Activated CD4-positive, alpha-beta memory T cell treated with anti-CD3 and anti-CD28 coated beads for 36 hours (primary cell): ENCODE measurements at regions of chr19 and their contacts with region 1.

Region 1: DNA sequence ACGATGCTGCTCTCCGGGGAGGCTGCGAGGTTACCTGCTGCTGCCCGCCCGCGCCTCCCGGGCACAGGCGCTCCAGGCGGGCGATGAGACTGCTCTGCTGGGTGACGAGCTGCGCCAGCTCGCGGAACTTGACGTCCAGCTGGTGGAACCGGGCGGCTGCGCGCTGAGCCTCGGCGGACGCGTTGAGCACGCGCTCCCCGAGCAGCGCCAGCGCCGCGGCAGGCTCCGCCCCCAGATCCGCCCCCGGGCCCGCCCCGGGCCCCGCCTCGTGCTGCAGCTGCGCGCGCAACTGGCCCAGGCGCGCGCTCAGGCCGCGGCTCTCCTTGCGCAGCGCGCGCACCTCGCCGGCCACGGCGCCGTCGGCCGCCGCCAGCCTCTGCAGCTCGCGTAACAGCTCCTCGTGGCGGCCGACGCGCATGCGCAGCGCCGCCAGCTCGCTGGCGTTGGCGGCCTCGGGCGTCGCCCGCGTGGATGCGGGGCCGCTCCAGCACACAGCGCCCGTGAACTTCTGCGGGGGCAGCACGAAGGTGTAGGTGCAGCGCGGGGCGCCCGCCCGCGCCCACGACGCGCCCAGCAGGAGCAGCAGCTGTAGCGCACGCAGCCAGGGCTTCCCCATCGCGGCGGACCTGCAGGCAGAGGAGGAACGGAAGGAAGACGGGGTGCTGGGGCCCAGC is 6.4 kb downstream of the ANGPTL6 start:
- DNase-seq: peak; percentile 92
- H3K4me3 Mint-ChIP-seq: peak overlapping the region; percentile 62
- H3K27ac Mint-ChIP-seq: peak overlapping the region; percentile 23
- H3K4me1 Mint-ChIP-seq: peaks cover 34% of the 10 kb centered on the region
- H3K27me3 Mint-ChIP-seq: no peaks in the 10 kb centered on the region

Region 2: DNA sequence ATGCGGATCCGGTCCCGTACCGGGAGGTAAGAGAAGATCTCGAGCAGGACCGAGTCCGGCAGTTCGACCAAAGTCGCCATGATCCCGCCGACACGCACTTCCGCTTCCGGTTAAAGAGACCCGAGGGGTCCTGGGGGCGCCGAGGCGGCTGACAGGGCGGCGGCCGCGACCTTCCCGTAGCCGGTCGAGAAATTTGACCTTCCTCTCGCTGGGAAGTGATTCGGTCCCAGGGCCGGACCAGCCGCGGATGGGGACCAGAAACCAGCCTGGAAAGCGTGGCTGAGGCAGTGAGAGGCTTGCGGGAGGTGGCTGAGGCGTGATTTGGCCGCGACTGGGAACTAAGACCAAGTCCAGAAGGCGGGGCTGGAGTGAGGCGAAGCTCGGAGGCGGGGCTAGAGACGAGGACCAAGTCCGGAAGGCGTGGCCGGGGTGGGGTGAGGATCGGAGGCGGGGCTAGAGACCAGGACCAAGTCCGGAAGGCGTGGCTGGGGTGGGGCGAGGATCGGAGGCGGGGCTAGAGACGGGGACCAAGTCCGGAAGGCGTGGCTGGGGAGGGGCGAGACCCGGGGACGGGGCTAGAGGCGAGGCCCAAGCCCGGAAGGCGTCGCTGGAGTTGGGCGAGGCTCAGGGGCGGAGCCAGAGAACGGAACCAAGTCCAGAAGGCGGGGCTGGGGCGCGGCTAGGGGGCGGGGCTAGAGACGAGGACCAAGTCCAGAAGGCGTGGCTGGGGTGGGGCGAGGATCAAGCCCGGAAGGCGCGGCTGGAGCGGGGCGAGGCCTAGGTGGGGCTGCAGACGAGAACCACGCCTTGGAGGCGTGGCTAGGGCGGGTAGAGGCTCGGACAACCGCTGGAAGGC is 277.1 kb before region 1 on chr19 and contains the start of gene FBXL12:
- CTCF ChIA-PET with region 1: no interaction called
- POLR2A ChIA-PET with region 1: no interaction called
- intact Hi-C with region 1: no loop called
- DNase-seq: peak; percentile 100
- H3K4me3 Mint-ChIP-seq: peak within 1 kb of the TSS; percentile 88
- H3K27ac Mint-ChIP-seq: peak within 1 kb of the TSS; percentile 91
- H3K4me1 Mint-ChIP-seq: peaks cover 28% of the 10 kb centered on the region
- H3K27me3 Mint-ChIP-seq: no peaks in the 10 kb centered on the region
- total RNA-seq, gene FBXL12: 20.7 to 22.0 TPM

Region 3: GRCh38 chr19:10120538-10121189 is 24.6 kb after region 1 on chr19:
- CTCF ChIA-PET with region 1: interaction called, 96 read pairs
- POLR2A ChIA-PET with region 1: interaction called, 75 read pairs
- intact Hi-C with region 1: no loop called
- DNase-seq: no peak
- H3K4me3 Mint-ChIP-seq: no peak overlapping the region
- H3K27ac Mint-ChIP-seq: no peak overlapping the region
- H3K4me1 Mint-ChIP-seq: peaks cover 26% of the 10 kb centered on the region
- H3K27me3 Mint-ChIP-seq: no peaks in the 10 kb centered on the region

Region 4: DNA sequence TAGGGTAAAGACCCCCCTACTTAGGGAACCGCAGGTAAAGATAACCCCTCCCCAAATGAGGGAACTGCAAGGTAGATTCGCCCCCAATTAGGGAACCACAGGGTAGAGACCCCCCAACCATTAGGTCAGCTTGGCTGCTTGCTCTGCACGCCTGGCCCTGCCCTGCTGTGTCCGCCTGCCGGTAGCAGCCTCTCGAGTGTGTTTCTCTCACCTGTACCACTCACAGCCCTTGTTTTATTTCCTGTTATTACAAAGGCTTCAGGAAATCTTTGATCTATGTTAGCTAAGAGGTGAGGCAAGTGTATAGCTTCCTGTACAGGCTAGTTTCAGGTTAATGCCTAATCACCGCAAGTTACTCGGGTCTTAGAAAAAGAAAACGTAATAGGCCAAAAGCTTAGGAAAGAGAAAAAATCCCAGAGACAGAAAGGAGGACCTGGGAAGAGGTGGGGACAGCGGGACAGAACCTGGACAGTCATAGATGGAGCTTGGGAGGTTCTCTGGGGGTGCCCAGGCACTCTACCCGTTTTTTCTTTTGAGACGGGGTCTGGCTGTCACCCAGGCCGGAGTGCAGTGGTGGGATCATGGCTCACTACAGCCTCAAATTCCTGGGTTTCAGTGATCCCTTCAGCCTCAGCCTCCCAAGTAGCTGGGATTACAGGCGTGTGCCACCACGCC is 46.8 kb after region 1 on chr19:
- CTCF ChIA-PET with region 1: interaction called, 13 read pairs
- POLR2A ChIA-PET with region 1: no interaction called
- intact Hi-C with region 1: no loop called
- DNase-seq: peak; percentile 51
- H3K4me3 Mint-ChIP-seq: no peak overlapping the region
- H3K27ac Mint-ChIP-seq: peak overlapping the region; percentile 94
- H3K4me1 Mint-ChIP-seq: peaks cover 44% of the 10 kb centered on the region
- H3K27me3 Mint-ChIP-seq: no peaks in the 10 kb centered on the region